CD4-positive, alpha-beta T cell (primary cell): ENCODE measurements at regions of chr1 and their contacts with region 1.

Region 1: GRCh38 chr1:203673550-203674427 is 47.2 kb downstream of the ATP2B4 start:
- DNase-seq: peak; percentile 50 to 94 (median 60)
- ATAC-seq: peak; percentile 87
- H3K4me3 ChIP-seq: peak overlapping the region; percentile 8
- H3K4me3 Mint-ChIP-seq: peak overlapping the region; percentile 82
- H3K27ac ChIP-seq: peak overlapping the region; percentile 59 to 74
- H3K27ac Mint-ChIP-seq: peak overlapping the region; percentile 93
- H3K4me1 ChIP-seq: peaks cover 86% of the 10 kb centered on the region
- H3K4me1 Mint-ChIP-seq: peaks cover 85% of the 10 kb centered on the region
- H3K27me3 ChIP-seq: no peaks in the 10 kb centered on the region
- H3K27me3 Mint-ChIP-seq: no peaks in the 10 kb centered on the region
- CTCF ChIP-seq: peak; percentile 64

Region 2: GRCh38 chr1:203326830-203327683 is 346.7 kb before region 1 on chr1:
- CTCF ChIA-PET with region 1: no interaction called
- POLR2A ChIA-PET with region 1: no interaction called
- intact Hi-C with region 1: loop called in 1 of 2 experiments (anchors 10 kb)
- DNase-seq: peak; percentile 89 to 97 (median 94)
- ATAC-seq: peak; percentile 65
- H3K4me3 ChIP-seq: peak overlapping the region; percentile 66
- H3K4me3 Mint-ChIP-seq: peak overlapping the region; percentile 81
- H3K27ac ChIP-seq: peak overlapping the region; percentile 98 to 99
- H3K27ac Mint-ChIP-seq: peak overlapping the region; percentile 92
- H3K4me1 ChIP-seq: peaks cover 67% of the 10 kb centered on the region
- H3K4me1 Mint-ChIP-seq: peaks cover 72% of the 10 kb centered on the region
- H3K27me3 ChIP-seq: no peaks in the 10 kb centered on the region
- H3K27me3 Mint-ChIP-seq: no peaks in the 10 kb centered on the region
- CTCF ChIP-seq: no peak

Region 3: DNA sequence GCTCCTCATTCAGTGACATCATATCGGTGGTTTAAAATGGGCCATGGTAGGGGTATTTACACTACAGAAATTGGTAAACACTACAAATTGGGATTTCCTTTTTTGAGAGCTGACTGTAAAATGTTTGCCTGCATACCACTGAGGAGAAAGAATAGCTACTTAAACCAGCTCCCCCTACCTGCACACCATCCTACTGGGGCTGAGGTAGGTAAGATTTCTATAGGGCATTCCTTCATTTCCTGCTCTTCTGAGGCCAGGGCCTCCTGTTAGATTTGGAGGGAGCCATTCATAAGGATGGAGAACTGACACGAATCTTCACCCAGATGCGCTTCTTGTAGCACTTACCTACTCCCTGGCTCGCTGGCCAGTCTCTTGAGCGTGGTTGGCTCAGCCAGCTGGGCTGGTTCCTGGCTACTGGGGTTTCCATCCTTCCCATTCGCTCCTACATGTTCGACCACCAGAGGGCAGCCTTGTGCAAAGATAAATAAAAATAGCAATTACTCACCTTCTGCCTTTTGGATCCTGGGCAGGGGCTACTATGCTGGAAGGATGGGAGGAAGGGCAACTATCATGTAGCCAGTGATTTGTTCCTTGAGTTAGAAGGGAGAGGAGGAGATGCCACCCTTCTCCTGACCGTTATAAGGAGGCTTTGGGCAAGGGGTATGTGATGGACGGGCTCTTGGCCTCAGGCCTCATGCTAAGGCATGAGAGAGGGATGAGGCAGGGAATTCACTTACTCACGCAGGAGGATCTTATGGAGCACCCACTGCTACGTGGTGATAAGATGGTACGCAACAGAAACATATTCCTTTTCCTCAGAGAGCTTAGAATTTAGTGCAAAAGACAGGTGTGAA is 169.2 kb before region 1 on chr1:
- CTCF ChIA-PET with region 1: interaction called, 7 read pairs
- POLR2A ChIA-PET with region 1: no interaction called
- intact Hi-C with region 1: loop called in 1 of 2 experiments (anchors 1 kb)
- DNase-seq: peak; percentile 50 to 89 (median 72)
- ATAC-seq: peak; percentile 65
- H3K4me3 ChIP-seq: no peak overlapping the region
- H3K4me3 Mint-ChIP-seq: no peak overlapping the region
- H3K27ac ChIP-seq: no peak overlapping the region
- H3K27ac Mint-ChIP-seq: no peak overlapping the region
- H3K4me1 ChIP-seq: peaks cover 5% of the 10 kb centered on the region
- H3K4me1 Mint-ChIP-seq: peaks cover 6% of the 10 kb centered on the region
- H3K27me3 ChIP-seq: no peaks in the 10 kb centered on the region
- H3K27me3 Mint-ChIP-seq: no peaks in the 10 kb centered on the region
- CTCF ChIP-seq: peak; percentile 81

Region 4: DNA sequence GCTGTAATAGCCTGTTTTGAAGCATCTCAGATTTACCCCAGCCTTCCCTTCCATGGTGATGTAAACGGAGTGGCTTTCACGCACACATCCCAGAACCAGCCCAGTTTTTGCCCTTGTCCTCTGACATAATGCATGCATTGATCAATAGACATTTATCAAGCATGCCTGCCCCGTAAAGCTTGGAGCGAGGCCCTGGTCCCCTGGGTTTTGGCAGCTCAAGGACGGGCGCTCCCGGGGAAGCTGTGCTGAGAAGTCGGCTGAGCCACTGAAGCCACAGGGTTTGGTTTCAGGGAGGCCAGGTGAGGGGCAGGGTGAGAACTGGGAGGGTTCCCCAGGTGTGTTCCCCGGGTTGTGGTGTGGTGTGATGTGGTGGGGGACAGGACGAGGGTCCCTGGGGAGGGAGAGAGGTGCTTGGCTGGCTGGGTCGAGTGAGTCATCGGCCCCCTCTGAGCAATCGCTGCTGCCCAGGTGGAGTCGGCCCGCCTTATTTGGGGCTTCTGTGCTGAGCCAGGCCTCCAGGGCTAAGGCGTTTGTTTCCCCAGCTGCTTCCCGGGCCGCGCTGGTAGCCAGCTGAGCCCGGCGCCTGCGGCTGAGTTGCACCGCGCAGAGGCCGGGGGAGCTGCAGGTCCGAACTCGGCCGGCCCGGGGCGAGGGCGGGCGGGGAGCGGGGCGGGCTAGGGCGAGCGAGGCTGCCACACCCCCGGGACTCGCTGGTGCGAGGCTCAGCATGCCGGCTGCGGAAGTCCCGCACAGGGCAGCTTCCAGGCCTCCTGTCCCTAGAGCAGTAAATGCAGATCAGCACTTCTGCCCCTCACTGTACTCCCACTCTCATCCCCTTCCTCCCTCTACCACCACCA is 23.6 kb before region 1 on chr1:
- CTCF ChIA-PET with region 1: interaction called, 19 read pairs
- POLR2A ChIA-PET with region 1: interaction called, 35 read pairs
- intact Hi-C with region 1: loop called (anchors 1 to 2 kb)
- DNase-seq: peak; percentile 44 to 88 (median 70)
- ATAC-seq: peak; percentile 61
- H3K4me3 ChIP-seq: peak overlapping the region; percentile 48
- H3K4me3 Mint-ChIP-seq: peak overlapping the region; percentile 85
- H3K27ac ChIP-seq: peak overlapping the region; percentile 70 to 82
- H3K27ac Mint-ChIP-seq: peak overlapping the region; percentile 91
- H3K4me1 ChIP-seq: peaks cover 76% of the 10 kb centered on the region
- H3K4me1 Mint-ChIP-seq: peaks cover 63% of the 10 kb centered on the region
- H3K27me3 ChIP-seq: no peaks in the 10 kb centered on the region
- H3K27me3 Mint-ChIP-seq: no peaks in the 10 kb centered on the region
- CTCF ChIP-seq: no peak

Region 5: DNA sequence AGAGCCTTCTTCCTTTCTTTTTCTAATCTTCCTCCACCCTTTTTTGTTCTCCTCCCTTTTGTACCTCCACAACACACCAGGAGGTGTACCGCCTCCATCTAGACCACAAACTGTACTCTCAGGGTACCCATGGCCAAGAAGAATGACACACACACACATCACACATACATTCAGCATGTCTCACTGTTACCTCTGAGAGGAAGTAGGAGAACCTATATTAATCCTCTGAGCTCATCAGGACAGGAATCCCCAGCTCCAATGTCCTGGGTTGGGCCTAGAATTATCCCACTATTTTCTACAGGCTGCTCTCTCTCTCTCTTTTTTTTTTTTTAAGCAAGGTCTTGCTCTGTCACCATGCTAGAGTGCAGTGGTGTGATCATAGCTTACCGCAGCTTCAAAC is 10.5 kb before region 1 on chr1:
- CTCF ChIA-PET with region 1: interaction called, 31 read pairs
- POLR2A ChIA-PET with region 1: interaction called, 9 read pairs
- intact Hi-C with region 1: no loop called
- DNase-seq: peak in 2 of 14 experiments; percentile 28 to 44
- ATAC-seq: peak; percentile 56
- H3K4me3 ChIP-seq: no peak overlapping the region
- H3K4me3 Mint-ChIP-seq: peak overlapping the region; percentile 46
- H3K27ac ChIP-seq: peak overlapping the region in 1 of 2 donors; percentile 10
- H3K27ac Mint-ChIP-seq: peak overlapping the region; percentile 58
- H3K4me1 ChIP-seq: peaks cover 74% of the 10 kb centered on the region
- H3K4me1 Mint-ChIP-seq: peaks cover 71% of the 10 kb centered on the region
- H3K27me3 ChIP-seq: no peaks in the 10 kb centered on the region
- H3K27me3 Mint-ChIP-seq: no peaks in the 10 kb centered on the region
- CTCF ChIP-seq: no peak

Region 6: GRCh38 chr1:203692565-203693470 is 19.0 kb after region 1 on chr1:
- CTCF ChIA-PET with region 1: interaction called, 5 read pairs
- POLR2A ChIA-PET with region 1: interaction called, 11 read pairs
- intact Hi-C with region 1: no loop called
- DNase-seq: peak in 3 of 14 experiments; percentile 29 to 42 (median 33)
- ATAC-seq: peak; percentile 46
- H3K4me3 ChIP-seq: no peak overlapping the region
- H3K4me3 Mint-ChIP-seq: peak overlapping the region; percentile 12
- H3K27ac ChIP-seq: peak overlapping the region in 1 of 2 donors; percentile 43
- H3K27ac Mint-ChIP-seq: peak overlapping the region; percentile 78
- H3K4me1 ChIP-seq: peaks cover 47% of the 10 kb centered on the region
- H3K4me1 Mint-ChIP-seq: peaks cover 63% of the 10 kb centered on the region
- H3K27me3 ChIP-seq: no peaks in the 10 kb centered on the region
- H3K27me3 Mint-ChIP-seq: no peaks in the 10 kb centered on the region
- CTCF ChIP-seq: no peak

Region 7: DNA sequence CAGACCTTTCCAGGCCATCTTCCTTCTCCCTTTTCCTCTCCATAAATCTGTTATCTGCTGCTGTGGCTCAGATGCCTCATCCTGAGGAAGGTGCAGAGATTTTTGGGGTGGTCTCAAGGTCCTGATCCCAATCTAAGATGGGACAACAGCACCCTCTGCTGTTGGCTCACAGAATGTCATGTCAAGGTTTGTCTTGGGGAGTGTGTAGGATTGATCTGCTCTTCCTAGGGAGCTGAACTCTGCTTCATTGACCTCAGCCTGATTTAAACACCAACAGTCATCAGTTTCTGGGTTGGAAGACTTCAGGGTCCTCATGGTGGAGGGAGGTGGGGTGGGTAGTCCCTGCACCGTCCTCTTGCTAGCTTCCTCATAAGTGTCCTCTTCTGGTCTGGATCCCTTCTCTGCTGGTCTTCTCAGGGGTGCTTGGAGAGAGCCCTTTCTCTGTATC is 28.4 kb after region 1 on chr1:
- CTCF ChIA-PET with region 1: interaction called, 12 read pairs
- POLR2A ChIA-PET with region 1: interaction called, 7 read pairs
- intact Hi-C with region 1: loop called (anchors 1 to 2 kb)
- DNase-seq: peak; percentile 42 to 83 (median 62)
- ATAC-seq: peak; percentile 74
- H3K4me3 ChIP-seq: no peak overlapping the region
- H3K4me3 Mint-ChIP-seq: no peak overlapping the region
- H3K27ac ChIP-seq: no peak overlapping the region
- H3K27ac Mint-ChIP-seq: peak overlapping the region; percentile 24
- H3K4me1 ChIP-seq: no peaks in the 10 kb centered on the region
- H3K4me1 Mint-ChIP-seq: peaks cover 15% of the 10 kb centered on the region
- H3K27me3 ChIP-seq: no peaks in the 10 kb centered on the region
- H3K27me3 Mint-ChIP-seq: no peaks in the 10 kb centered on the region
- CTCF ChIP-seq: peak; percentile 91

Region 8: DNA sequence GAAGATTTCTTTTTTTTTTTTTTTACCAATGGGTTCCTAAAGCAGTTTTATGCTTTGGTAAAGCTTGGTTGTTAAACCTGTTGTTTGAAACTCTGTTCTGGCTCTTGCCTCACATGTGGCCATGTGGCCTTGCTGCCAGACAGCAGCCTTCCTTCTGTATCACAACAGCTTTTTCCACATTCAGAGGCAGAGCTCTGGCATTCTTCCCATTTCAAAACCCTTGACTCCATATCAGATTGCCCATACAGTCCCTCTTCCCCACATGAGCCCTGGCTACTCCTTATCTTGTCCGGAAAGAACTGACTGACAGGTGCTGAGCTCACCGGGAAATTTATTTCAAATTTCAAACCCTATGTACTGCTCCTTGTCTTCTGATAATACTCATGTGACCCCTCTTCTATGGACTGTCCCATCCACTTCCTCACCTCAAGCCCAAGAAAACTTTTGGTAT is 52.7 kb after region 1 on chr1:
- CTCF ChIA-PET with region 1: no interaction called
- POLR2A ChIA-PET with region 1: no interaction called
- intact Hi-C with region 1: no loop called
- DNase-seq: no peak
- ATAC-seq: no peak
- H3K4me3 ChIP-seq: no peak overlapping the region
- H3K4me3 Mint-ChIP-seq: no peak overlapping the region
- H3K27ac ChIP-seq: no peak overlapping the region
- H3K27ac Mint-ChIP-seq: no peak overlapping the region
- H3K4me1 ChIP-seq: no peaks in the 10 kb centered on the region
- H3K4me1 Mint-ChIP-seq: no peaks in the 10 kb centered on the region
- H3K27me3 ChIP-seq: no peaks in the 10 kb centered on the region
- H3K27me3 Mint-ChIP-seq: no peaks in the 10 kb centered on the region
- CTCF ChIP-seq: no peak